ENCODE measurements at regions of chr3 and their contacts with region 1.

Region 1: DNA sequence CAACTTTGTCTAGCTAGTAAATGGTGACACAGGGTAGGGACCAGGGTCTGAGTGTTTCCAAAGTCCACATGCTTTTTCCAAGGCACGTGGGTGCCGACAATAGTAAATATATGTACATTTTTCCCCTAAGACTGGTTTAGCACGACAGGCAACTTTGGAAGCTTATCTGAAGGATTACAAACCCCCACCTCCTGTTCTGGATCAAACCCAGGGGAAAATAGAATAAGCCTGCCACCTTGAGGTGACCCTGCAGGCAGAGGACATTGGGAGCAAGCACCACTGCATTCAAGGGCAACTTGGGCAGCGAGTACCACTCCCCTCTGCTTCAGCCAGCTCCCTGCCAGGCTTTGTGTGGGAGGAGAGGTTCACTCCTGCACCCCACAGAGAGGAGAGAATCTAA is 44.8 kb downstream of the KBTBD12 start:
- DNase-seq: peak; percentile 84 to 89
- H3K4me3 ChIP-seq: no peak overlapping the region
- H3K4me3 Mint-ChIP-seq: peak overlapping the region; percentile 45
- H3K27ac Mint-ChIP-seq: peak overlapping the region; percentile 8
- H3K4me1 ChIP-seq: peaks cover 17% of the 10 kb centered on the region
- H3K4me1 Mint-ChIP-seq: peaks cover 42% of the 10 kb centered on the region
- H3K27me3 ChIP-seq: no peaks in the 10 kb centered on the region
- H3K27me3 Mint-ChIP-seq: no peaks in the 10 kb centered on the region
- CTCF ChIP-seq: peak; percentile 68 to 81

Region 2: GRCh38 chr3:127547761-127548605 is 411.9 kb before region 1 on chr3:
- CTCF ChIA-PET with region 1: no interaction called
- POLR2A ChIA-PET with region 1: no interaction called
- intact Hi-C with region 1: no loop called
- DNase-seq: peak; percentile 60 to 86
- H3K4me3 ChIP-seq: peak overlapping the region; percentile 54
- H3K4me3 Mint-ChIP-seq: peak overlapping the region; percentile 78
- H3K27ac Mint-ChIP-seq: no peak overlapping the region
- H3K4me1 ChIP-seq: peaks cover 12% of the 10 kb centered on the region; the same call in 1 of the 2 replicates
- H3K4me1 Mint-ChIP-seq: no peaks in the 10 kb centered on the region
- H3K27me3 ChIP-seq: no peaks in the 10 kb centered on the region
- H3K27me3 Mint-ChIP-seq: no peaks in the 10 kb centered on the region
- CTCF ChIP-seq: peak; percentile 64 to 84

Region 3: DNA sequence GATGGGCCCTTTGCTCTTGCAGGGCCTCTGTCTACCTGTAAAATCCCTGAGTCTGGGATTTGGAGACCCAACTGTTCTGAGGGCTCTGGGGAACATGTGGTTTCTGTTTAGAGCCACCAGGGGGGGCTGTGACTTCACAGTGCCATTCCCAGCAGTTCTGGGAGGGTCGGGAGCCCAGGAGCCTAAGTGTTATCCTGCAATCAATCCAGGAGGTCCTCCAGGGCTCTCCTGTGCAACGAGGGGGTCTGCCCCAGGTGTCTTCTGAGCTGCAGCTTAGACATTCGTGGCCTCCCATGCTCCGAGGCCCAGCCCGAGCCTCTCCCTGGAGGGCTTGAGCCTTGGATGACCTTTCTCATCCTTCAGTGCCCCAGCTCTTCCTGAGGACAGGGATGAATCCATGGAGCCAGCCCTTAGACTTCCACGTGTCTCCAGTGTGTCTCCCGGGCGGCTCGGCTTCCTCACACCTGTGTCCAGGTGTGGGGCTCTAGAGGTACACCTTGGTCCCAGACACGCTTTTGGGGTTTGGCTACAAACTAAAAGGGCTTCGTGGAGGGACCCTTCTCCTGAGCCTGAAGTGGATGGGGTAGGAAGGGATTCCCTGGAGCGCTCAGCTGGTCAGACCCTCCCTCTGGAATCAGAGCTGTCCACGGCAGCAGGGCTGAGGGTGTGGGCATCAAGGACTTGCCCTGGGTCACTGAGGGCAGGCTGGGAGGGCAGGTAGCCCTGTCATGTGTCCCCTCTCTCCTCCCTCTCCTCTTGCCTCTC is 307.4 kb before region 1 on chr3:
- CTCF ChIA-PET with region 1: interaction called, 4 read pairs
- POLR2A ChIA-PET with region 1: no interaction called
- intact Hi-C with region 1: loop called (anchors 1 kb)
- DNase-seq: peak in 1 of 2 experiments; percentile 69
- H3K4me3 ChIP-seq: no peak overlapping the region
- H3K4me3 Mint-ChIP-seq: no peak overlapping the region
- H3K27ac Mint-ChIP-seq: peak overlapping the region; percentile 41
- H3K4me1 ChIP-seq: no peaks in the 10 kb centered on the region
- H3K4me1 Mint-ChIP-seq: no peaks in the 10 kb centered on the region
- H3K27me3 ChIP-seq: no peaks in the 10 kb centered on the region
- H3K27me3 Mint-ChIP-seq: no peaks in the 10 kb centered on the region
- CTCF ChIP-seq: peak; percentile 71 to 77

Region 4: GRCh38 chr3:127690823-127691452 is 268.9 kb before region 1 on chr3:
- CTCF ChIA-PET with region 1: interaction called, 18 read pairs
- POLR2A ChIA-PET with region 1: no interaction called
- intact Hi-C with region 1: loop called (anchors 1 kb)
- DNase-seq: peak; percentile 70 to 81
- H3K4me3 ChIP-seq: no peak overlapping the region
- H3K4me3 Mint-ChIP-seq: no peak overlapping the region
- H3K27ac Mint-ChIP-seq: no peak overlapping the region
- H3K4me1 ChIP-seq: peaks cover 27% of the 10 kb centered on the region
- H3K4me1 Mint-ChIP-seq: no peaks in the 10 kb centered on the region
- H3K27me3 ChIP-seq: no peaks in the 10 kb centered on the region
- H3K27me3 Mint-ChIP-seq: no peaks in the 10 kb centered on the region
- CTCF ChIP-seq: peak; percentile 35 to 73

Region 5: DNA sequence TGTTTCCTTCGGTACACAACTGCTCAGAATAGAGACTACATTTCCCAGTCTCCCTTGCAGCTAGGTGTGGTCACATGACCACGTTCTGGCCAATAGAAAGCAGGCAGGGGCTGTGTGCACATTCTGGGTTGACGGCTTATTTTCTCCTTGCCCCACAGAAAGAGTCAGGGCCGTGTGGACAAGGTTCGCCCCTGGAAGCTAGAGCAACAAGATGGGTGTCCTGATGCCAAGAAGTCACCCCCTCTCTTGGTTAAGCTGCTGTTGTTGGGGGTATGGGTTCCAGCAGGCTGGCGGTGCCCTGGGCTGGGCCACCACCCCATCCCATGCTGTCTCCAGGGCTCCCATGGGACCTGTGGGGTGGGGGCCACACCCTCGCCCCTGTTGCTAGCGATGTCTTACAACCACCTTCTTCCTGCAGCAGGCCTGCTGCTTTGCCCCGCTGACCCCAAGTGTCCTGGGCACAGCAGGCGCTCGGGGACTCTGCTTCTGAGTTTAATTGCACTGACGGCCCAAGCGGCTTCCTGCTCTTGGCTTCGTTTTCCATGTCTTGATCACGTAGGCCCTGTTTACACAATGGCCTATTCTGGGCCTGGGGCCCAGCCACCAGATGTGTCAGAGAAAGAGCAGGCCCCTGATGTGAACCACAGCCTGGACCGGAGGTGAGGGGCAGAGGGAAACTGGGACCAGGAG is 262.1 kb before region 1 on chr3:
- CTCF ChIA-PET with region 1: interaction called, 15 read pairs
- POLR2A ChIA-PET with region 1: no interaction called
- intact Hi-C with region 1: no loop called
- DNase-seq: peak; percentile 66 to 73
- H3K4me3 ChIP-seq: no peak overlapping the region
- H3K4me3 Mint-ChIP-seq: peak overlapping the region; percentile 22
- H3K27ac Mint-ChIP-seq: peak overlapping the region; percentile 48
- H3K4me1 ChIP-seq: no peaks in the 10 kb centered on the region
- H3K4me1 Mint-ChIP-seq: no peaks in the 10 kb centered on the region
- H3K27me3 ChIP-seq: no peaks in the 10 kb centered on the region
- H3K27me3 Mint-ChIP-seq: no peaks in the 10 kb centered on the region
- CTCF ChIP-seq: no peak

Region 6: DNA sequence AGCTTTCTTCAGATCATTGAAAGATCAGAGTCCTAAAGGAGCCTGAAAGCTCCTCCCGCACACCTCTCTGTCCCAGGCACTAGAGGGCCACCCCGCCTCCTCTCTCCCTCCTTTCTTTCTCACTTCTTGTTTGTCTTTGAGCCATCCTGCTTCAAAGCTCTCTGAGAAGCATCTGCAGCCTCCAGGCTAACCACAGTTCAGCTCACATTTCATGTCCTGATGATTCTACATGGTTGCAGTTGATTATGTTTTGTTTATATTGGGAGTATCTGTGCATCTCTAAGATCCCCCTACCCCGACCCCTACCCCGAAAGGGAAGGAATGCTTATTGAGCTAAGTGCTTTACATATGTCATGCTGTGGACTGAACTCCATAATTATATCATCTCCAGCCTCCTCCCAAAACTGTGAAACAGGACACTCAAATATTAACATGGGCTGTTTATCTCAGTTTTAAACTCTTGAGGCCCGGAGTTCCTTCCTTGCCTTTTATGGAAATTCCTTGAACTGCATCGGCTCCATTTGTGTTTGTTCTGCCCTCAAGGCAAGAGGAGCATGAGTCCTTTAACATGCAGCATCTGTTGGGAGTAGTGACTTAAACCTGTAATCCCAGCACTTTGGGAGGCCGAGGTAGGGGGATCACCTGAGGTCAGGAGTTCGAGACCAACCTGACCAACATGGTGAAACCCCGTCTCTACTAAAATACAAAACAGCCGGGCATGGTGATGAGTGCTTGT is 168.5 kb before region 1 on chr3:
- CTCF ChIA-PET with region 1: interaction called, 19 read pairs
- POLR2A ChIA-PET with region 1: no interaction called
- intact Hi-C with region 1: loop called (anchors 1 kb)
- DNase-seq: peak; percentile 68 to 72
- H3K4me3 ChIP-seq: no peak overlapping the region
- H3K4me3 Mint-ChIP-seq: no peak overlapping the region
- H3K27ac Mint-ChIP-seq: peak overlapping the region; percentile 77
- H3K4me1 ChIP-seq: peaks cover 25% of the 10 kb centered on the region
- H3K4me1 Mint-ChIP-seq: peaks cover 16% of the 10 kb centered on the region
- H3K27me3 ChIP-seq: no peaks in the 10 kb centered on the region
- H3K27me3 Mint-ChIP-seq: no peaks in the 10 kb centered on the region
- CTCF ChIP-seq: peak in 1 of 2 experiments; percentile 71

Region 7: DNA sequence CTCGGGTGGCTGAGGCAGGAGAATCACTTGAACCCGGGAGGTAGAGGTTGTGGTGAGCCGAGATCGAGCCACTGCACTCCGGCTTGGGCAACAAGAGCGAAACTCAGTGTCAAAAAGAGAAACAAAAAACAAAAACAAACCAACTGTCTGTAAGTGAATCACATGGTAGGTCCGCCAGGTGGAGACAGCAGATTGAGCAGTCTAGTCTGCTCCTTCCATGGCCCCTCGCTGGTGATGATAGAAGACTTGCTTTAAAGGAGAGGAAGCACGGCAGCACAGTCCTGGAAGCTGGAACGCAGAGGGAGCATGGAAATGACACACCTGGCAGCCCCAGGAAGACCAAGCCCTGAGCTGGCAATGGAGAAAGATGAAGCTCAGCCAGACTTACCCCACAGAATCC is 106.2 kb before region 1 on chr3:
- CTCF ChIA-PET with region 1: no interaction called
- POLR2A ChIA-PET with region 1: no interaction called
- intact Hi-C with region 1: loop called (anchors 1 kb)
- DNase-seq: peak; percentile 32 to 43
- H3K4me3 ChIP-seq: no peak overlapping the region
- H3K4me3 Mint-ChIP-seq: no peak overlapping the region
- H3K27ac Mint-ChIP-seq: no peak overlapping the region
- H3K4me1 ChIP-seq: no peaks in the 10 kb centered on the region
- H3K4me1 Mint-ChIP-seq: no peaks in the 10 kb centered on the region
- H3K27me3 ChIP-seq: no peaks in the 10 kb centered on the region
- H3K27me3 Mint-ChIP-seq: no peaks in the 10 kb centered on the region
- CTCF ChIP-seq: no peak

Region 8: DNA sequence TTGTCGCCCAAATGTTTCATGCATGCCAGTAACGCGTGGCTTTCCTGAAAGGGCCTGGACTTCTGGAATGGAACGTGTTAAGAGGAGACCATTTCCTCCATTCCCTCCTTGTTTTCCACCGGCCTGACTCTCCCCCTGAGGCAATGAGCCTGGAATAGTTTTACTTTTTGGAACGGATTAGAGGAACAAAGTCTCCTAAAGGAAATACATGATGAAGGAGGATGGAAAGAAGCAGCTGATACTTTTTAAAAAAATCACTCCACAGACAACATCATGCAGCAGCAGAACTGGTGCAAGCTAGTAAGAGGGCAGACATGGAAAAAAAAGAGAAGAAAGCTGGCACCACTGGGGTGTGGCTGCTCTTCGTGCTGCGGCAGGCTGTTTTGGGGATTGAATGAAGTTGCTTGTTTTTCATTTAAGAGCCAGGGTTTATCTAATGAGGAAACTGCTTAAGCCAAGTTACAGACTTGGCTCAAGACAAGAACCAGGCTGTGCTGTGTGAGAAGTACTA is 48.4 kb before region 1 on chr3:
- CTCF ChIA-PET with region 1: no interaction called
- POLR2A ChIA-PET with region 1: no interaction called
- intact Hi-C with region 1: no loop called
- DNase-seq: no peak
- H3K4me3 ChIP-seq: no peak overlapping the region
- H3K4me3 Mint-ChIP-seq: no peak overlapping the region
- H3K27ac Mint-ChIP-seq: no peak overlapping the region
- H3K4me1 ChIP-seq: no peaks in the 10 kb centered on the region
- H3K4me1 Mint-ChIP-seq: no peaks in the 10 kb centered on the region
- H3K27me3 ChIP-seq: no peaks in the 10 kb centered on the region; the same call in 1 of the 2 replicates
- H3K27me3 Mint-ChIP-seq: peaks cover 5% of the 10 kb centered on the region
- CTCF ChIP-seq: no peak

Region 9: DNA sequence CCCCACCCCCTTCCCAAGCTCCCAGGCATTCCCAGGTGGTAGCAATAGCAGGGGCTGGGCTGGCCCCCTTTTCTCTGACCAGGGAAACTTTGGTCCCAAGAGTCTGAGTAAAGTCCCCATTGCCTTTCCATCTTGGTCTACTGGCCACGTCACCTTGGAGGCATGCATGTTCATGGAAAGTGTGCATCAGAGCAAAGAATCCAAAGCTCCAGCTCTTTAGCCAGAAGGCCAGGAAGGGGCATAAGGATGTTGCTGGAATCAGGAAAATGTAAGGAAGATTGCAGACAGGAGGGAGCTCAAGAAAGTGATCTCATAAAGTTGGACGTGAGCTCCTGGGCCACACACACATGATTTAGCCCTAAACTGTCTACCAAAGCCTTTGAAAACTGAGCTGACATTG is 18.8 kb after region 1 on chr3:
- CTCF ChIA-PET with region 1: no interaction called
- POLR2A ChIA-PET with region 1: no interaction called
- intact Hi-C with region 1: no loop called
- DNase-seq: no peak
- H3K4me3 ChIP-seq: no peak overlapping the region
- H3K4me3 Mint-ChIP-seq: no peak overlapping the region
- H3K27ac Mint-ChIP-seq: no peak overlapping the region
- H3K4me1 ChIP-seq: no peaks in the 10 kb centered on the region
- H3K4me1 Mint-ChIP-seq: no peaks in the 10 kb centered on the region
- H3K27me3 ChIP-seq: 0 out of 2 replicates have a peak, but pooled peaks cover 2% of the 10 kb centered on the region
- H3K27me3 Mint-ChIP-seq: peaks cover 4% of the 10 kb centered on the region
- CTCF ChIP-seq: no peak

Region 10: DNA sequence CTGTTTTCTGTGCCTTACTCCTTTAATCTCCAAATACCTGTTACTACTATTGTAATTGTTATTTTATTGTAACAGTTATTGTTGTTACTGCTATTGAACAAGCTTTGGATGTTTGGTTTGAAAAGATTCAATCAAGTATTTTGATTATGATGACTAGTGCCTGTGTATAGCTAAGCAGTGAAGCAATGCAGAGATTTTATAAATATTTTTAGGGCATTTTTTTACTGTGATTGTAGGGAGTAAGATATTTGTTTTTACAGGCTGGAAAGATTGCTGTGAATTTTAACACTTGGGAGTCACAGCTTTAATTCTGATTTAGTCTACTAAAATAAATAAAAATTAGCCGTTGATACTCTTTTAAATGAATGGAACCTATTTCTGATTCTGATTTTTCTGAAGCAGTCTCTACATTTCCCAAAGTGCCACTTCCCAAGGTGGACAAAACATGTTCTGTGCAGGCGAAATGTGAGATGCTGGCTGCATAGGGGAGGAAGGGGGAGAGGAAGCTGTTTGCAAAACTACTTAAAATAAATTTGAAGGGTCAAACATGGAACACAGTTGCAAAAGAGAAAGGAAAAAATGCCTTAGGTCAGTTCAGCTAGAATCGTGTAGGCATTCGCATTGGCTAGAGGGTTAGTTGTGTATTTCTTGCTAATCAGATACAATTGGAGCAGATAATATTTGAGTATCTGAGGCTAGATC is 219.1 kb after region 1 on chr3:
- CTCF ChIA-PET with region 1: no interaction called
- POLR2A ChIA-PET with region 1: no interaction called
- intact Hi-C with region 1: no loop called
- DNase-seq: no peak
- H3K4me3 ChIP-seq: no peak overlapping the region
- H3K4me3 Mint-ChIP-seq: no peak overlapping the region
- H3K27ac Mint-ChIP-seq: no peak overlapping the region
- H3K4me1 ChIP-seq: no peaks in the 10 kb centered on the region
- H3K4me1 Mint-ChIP-seq: peaks cover 6% of the 10 kb centered on the region
- H3K27me3 ChIP-seq: no peaks in the 10 kb centered on the region
- H3K27me3 Mint-ChIP-seq: no peaks in the 10 kb centered on the region
- CTCF ChIP-seq: no peak